Mammary epithelial cell (primary cell): ENCODE measurements at regions of chr9 and their contacts with region 1.

Region 1: DNA sequence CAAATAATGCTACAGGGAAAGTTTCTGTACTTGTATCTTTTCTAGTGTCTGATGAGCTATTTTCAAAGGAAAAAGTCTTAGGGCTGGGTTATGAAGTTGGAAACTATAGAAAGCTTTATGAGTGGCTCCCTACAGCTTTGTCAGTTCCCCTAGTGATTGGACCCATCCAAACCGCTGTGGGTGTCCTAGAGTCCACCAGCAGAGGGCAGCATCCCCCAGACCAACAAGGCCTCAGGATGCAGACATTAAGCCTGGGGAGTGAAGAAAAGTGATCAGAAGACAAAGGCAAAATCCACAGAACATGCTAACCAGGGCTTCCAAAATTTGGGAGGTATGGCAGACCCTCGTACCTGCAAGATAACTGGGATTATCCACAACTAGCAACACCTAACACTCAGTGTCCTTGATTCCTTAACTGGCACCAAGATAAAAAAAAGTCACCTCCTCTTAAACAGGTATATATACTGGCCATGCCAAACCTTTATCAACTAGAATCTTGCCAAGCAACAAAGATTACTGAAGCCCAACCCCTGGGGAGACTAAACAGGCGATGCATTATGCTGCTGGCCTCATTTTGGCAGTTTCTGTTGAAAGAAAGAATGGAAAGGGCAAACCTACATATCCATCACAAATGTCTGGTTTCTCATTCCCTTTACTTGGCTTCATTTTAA is 110.4 kb upstream of the NR5A1 start:
- DNase-seq: peak; percentile 57
- H3K4me3 ChIP-seq: no peak overlapping the region
- H3K27ac ChIP-seq: no peak overlapping the region
- H3K4me1 ChIP-seq: peaks cover 9% of the 10 kb centered on the region
- H3K27me3 ChIP-seq: no peaks in the 10 kb centered on the region
- CTCF ChIP-seq: peak; percentile 94 to 96

Region 2: DNA sequence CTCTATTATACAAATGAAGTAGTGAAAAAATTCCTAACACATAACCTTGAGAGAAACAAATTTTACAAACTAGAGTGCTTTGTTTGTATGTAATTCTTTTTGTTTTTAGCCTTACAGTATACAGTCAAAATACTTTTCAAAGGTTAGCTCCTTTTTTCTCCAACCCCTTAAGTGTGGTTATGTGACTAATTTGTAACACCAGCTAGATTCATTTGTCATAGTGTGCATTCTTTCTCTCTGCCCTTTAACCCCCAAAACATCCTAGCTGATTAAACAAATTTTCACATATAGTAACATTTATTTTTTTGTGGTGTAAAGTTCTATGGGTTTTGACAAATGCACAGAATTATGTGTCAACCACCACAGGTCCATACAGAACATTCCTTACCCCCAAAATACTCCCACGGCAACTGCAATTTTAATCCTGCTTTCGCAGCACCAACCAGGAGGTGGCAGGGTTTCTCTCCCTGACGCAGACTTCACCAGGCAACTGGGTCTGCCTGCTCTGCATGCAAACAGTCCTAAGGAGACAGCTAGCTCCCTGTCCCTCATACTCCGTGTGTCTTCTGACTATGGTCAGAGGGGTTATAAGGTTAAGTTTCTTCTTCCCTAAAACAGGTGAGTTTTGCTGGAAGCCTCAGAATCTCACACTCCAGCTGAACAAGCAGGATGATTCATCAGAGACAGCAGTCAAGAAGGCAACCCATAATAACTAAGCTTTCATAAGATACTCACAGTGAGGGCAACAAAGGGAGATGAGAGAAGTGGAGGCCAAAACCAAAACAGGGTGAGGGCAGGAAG is 65.9 kb before region 1 on chr9:
- CTCF ChIA-PET with region 1: interaction called, 9 read pairs
- dilution Hi-C with region 1: no loop called
- in situ Hi-C with region 1: no loop called
- intact Hi-C with region 1: loop called (anchors 1 kb)
- DNase-seq: peak; percentile 76
- H3K4me3 ChIP-seq: no peak overlapping the region
- H3K27ac ChIP-seq: no peak overlapping the region
- H3K4me1 ChIP-seq: peaks cover 11% of the 10 kb centered on the region
- H3K27me3 ChIP-seq: no peaks in the 10 kb centered on the region
- CTCF ChIP-seq: peak; percentile 76 to 85

Region 3: DNA sequence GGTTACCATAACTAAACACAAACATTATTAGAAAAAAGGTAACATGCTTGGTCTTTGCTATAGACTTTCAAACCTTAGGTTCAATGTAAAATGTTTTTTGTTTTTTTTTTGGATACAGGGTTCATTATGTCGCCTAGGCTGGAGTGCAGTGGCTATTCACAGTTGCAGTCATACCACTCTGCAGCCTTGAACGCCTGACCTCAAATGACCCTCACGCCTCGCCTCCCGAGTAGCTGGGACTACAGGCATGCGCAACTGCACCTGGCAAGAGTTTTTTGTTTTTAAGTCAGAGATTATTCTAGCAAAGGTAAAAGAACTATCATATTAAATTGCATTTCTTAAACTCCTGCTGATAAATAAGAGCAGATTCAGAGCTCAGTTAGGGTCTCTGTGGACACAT is 55.3 kb before region 1 on chr9:
- CTCF ChIA-PET with region 1: no interaction called
- dilution Hi-C with region 1: no loop called
- in situ Hi-C with region 1: no loop called
- intact Hi-C with region 1: no loop called
- DNase-seq: no peak
- H3K4me3 ChIP-seq: no peak overlapping the region
- H3K27ac ChIP-seq: no peak overlapping the region
- H3K4me1 ChIP-seq: no peaks in the 10 kb centered on the region
- H3K27me3 ChIP-seq: no peaks in the 10 kb centered on the region
- CTCF ChIP-seq: no peak

Region 4: DNA sequence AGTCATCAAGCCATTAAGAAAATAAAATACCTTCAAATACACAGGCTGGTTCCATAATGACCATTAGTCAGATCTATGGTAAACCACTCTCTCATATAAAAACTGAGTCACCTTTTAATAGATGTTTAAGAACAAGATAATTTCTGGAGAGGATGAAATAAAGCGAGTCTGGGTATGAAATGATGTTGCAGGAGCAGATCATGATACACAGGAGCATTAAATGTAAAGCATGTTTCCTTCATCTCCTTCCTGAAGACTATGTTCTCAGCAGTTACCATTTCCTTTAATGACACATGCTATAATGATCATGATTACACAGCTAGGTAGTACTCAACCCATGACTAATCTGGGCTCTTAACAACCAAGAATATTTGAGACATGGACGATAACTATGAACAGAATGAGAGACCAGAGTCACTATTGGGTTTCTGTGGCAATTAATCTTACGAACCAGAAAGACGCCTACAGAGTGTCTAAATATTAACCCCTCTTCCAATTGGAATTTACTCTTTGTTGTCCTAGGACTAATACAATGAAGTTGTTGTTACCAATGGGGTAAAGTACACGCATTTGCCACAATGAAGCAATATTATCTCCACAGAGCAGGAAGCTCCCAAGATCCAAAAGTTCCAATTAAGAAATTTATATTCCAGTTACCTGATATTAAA is 47.9 kb after region 1 on chr9:
- CTCF ChIA-PET with region 1: interaction called, 6 read pairs
- dilution Hi-C with region 1: no loop called
- in situ Hi-C with region 1: loop called in 1 of 2 experiments (anchors 5 kb)
- intact Hi-C with region 1: no loop called
- DNase-seq: peak; percentile 88
- H3K4me3 ChIP-seq: no peak overlapping the region
- H3K27ac ChIP-seq: peak overlapping the region; percentile 66
- H3K4me1 ChIP-seq: peaks cover 23% of the 10 kb centered on the region
- H3K27me3 ChIP-seq: no peaks in the 10 kb centered on the region
- CTCF ChIP-seq: no peak

Region 5: DNA sequence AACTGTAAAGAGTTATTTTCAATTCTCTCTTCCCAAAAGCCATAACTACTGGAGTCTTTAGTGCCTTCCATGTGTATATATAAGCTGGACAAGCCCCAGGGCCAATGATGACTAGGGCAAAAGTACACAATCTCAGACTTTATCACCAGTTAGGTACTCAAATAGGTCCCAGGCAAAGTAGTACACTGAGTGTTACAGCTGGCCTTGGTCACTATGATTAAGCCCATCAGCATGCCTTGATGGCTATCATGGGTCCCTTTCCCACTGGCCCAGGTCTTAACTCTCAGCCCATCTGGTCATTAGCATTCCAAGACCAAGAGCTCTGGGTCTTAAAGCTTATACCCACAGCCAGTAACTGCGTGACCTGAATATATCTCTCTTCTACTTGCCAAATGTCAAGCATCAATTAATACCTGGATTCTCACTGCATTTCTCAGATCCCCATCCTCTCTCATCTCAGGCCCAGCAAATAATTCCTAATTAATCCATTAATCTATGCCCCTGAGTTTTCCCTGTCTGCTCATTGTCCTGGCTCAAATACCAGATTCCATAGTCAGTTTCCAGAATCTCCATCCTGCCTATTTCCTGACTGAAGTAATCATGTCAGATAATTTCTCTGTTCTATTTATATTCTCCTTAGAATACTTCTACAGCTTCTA is 91.2 kb after region 1 on chr9:
- CTCF ChIA-PET with region 1: interaction called, 5 read pairs
- dilution Hi-C with region 1: loop called (anchors 5 kb)
- in situ Hi-C with region 1: loop called (anchors 5 kb)
- intact Hi-C with region 1: loop called (anchors 1 kb)
- DNase-seq: peak; percentile 20
- H3K4me3 ChIP-seq: no peak overlapping the region
- H3K27ac ChIP-seq: no peak overlapping the region
- H3K4me1 ChIP-seq: peaks cover 11% of the 10 kb centered on the region
- H3K27me3 ChIP-seq: no peaks in the 10 kb centered on the region
- CTCF ChIP-seq: no peak

Region 6: GRCh38 chr9:124764774-124765438 is 147.3 kb after region 1 on chr9:
- CTCF ChIA-PET with region 1: interaction called, 10 read pairs
- dilution Hi-C with region 1: no loop called
- in situ Hi-C with region 1: no loop called
- intact Hi-C with region 1: loop called (anchors 2 kb)
- DNase-seq: no peak
- H3K4me3 ChIP-seq: no peak overlapping the region
- H3K27ac ChIP-seq: no peak overlapping the region
- H3K4me1 ChIP-seq: peaks cover 10% of the 10 kb centered on the region
- H3K27me3 ChIP-seq: no peaks in the 10 kb centered on the region
- CTCF ChIP-seq: peak; percentile 45 to 52